Activated T-helper 1 cell treated with anti-CD3 and anti-CD28 coated beads, Interleukin-12 subunit alpha, Interleukin-12 subunit beta, Interleukin-2, Interleukin-4 antibody, amounts not matched to agents 30 ng/mL and 10 ng/mL and 1 ng/mL, durations not matched to agents 14 hours and 24 hours and 36 hours (primary cell): ENCODE measurements at regions of chr9 and their contacts with region 1.

Region 1: GRCh38 chr9:88007206-88007631 is 32.9 kb upstream of the CDK20 start:
- DNase-seq: peak; percentile 39
- H3K4me3 Mint-ChIP-seq: no peak overlapping the region
- H3K27ac Mint-ChIP-seq: no peak overlapping the region
- H3K4me1 Mint-ChIP-seq: peaks cover 10% of the 10 kb centered on the region
- H3K27me3 Mint-ChIP-seq: peaks cover 19% of the 10 kb centered on the region

Region 2: DNA sequence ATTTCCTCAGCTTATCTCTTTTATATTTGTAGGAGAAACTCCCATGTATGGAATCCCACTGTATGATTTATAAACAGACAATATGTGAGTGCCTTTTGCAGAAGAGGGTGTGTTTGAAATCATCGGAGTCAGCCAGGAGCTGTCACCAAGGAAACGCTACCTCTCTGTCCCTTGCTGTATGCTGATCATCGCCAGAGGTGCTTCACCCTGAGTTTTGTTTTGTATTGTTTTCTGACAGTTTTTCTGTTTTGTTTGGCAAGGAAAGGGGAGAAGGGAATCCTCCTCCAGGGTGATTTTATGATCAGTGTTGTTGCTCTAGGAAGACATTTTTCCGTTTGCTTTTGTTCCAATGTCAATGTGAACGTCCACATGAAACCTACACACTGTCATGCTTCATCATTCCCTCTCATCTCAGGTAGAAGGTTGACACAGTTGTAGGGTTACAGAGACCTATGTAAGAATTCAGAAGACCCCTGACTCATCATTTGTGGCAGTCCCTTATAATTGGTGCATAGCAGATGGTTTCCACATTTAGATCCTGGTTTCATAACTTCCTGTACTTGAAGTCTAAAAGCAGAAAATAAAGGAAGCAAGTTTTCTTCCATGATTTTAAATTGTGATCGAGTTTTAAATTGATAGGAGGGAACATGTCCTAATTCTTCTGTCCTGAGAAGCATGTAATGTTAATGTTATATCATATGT is 299.3 kb before region 1 on chr9:
- intact Hi-C with region 1: loop called (anchors 1 kb)
- DNase-seq: no peak
- H3K4me3 Mint-ChIP-seq: no peak overlapping the region
- H3K27ac Mint-ChIP-seq: no peak overlapping the region
- H3K4me1 Mint-ChIP-seq: peaks cover 30% of the 10 kb centered on the region
- H3K27me3 Mint-ChIP-seq: peaks cover 33% of the 10 kb centered on the region

Region 3: GRCh38 chr9:87973730-87974292 is 33.4 kb before region 1 on chr9:
- intact Hi-C with region 1: loop called (anchors 1 kb)
- DNase-seq: no peak
- H3K4me3 Mint-ChIP-seq: peak overlapping the region; percentile 93
- H3K27ac Mint-ChIP-seq: peak overlapping the region; percentile 76
- H3K4me1 Mint-ChIP-seq: peaks cover 13% of the 10 kb centered on the region
- H3K27me3 Mint-ChIP-seq: peaks cover 6% of the 10 kb centered on the region

Region 4: GRCh38 chr9:88049677-88050352 is 42.6 kb after region 1 on chr9:
- intact Hi-C with region 1: loop called (anchors 1 kb)
- DNase-seq: no peak
- H3K4me3 Mint-ChIP-seq: no peak overlapping the region
- H3K27ac Mint-ChIP-seq: no peak overlapping the region
- H3K4me1 Mint-ChIP-seq: peaks cover 11% of the 10 kb centered on the region
- H3K27me3 Mint-ChIP-seq: peaks cover 2% of the 10 kb centered on the region

Region 5: GRCh38 chr9:88310310-88310995 is 303.2 kb after region 1 on chr9:
- intact Hi-C with region 1: loop called (anchors 5 kb)
- DNase-seq: no peak
- H3K4me3 Mint-ChIP-seq: no peak overlapping the region
- H3K27ac Mint-ChIP-seq: peak overlapping the region; percentile 48
- H3K4me1 Mint-ChIP-seq: peaks cover 70% of the 10 kb centered on the region
- H3K27me3 Mint-ChIP-seq: peaks cover 1% of the 10 kb centered on the region

Region 6: DNA sequence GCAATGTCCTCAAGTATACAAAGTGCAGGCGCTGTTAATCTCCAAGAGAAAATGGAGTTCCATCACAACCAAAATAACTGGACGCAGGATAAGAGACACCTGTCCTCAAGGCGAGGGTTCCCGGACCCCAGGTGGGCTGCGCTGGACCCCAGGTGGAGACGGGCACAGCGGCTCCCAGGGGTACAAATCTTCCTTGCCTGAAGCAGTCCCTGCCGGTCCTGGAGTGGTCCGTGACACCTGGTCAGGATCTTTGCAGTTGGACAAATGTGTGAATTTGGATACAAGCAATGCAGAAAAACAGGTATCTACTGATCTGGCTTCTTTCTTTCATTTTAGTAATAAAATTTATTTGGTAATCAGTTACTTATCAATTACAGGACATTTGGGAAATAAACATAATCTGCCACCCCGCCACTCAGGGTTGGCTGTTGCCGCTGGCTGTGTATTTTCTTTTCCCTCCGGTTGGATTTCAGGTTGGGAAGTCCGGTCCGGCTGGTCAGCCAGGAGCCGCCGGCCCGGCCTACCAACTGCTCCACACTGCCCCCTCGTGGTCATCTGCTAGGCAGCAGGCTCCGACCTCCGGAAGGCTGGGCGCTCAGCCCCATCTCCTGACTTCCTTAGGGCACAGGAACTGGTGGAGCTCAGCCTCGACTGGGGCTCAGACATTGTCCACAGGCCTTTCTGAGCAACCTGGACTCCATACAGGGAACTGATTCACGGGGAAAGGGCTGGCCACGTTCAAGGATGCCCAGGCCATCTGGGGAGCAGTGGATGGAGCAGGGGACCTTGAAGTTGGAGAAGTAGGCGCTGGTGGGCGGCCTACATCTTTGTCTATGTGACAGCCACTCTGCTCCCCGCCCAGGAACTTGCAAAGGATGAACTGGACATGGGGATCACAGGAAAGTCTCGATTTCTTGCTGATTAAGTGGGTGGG is 571.2 kb after region 1 on chr9:
- intact Hi-C with region 1: loop called (anchors 5 kb)
- DNase-seq: peak; percentile 46
- H3K4me3 Mint-ChIP-seq: no peak overlapping the region
- H3K27ac Mint-ChIP-seq: no peak overlapping the region
- H3K4me1 Mint-ChIP-seq: peaks cover 5% of the 10 kb centered on the region
- H3K27me3 Mint-ChIP-seq: peaks cover 14% of the 10 kb centered on the region